ENCODE measurements at regions of chr9 and their contacts with region 1.

Region 1: GRCh38 chr9:37485389-37486219 is at the start of gene POLR1E:
- DNase-seq: peak; percentile 97
- H3K4me3 Mint-ChIP-seq: peak within 1 kb of the TSS; percentile 90
- H3K27ac Mint-ChIP-seq: peak within 1 kb of the TSS; percentile 94
- H3K4me1 Mint-ChIP-seq: peaks cover 27% of the 10 kb centered on the region
- H3K27me3 Mint-ChIP-seq: no peaks in the 10 kb centered on the region
- CTCF ChIP-seq: no peak
- total RNA-seq, gene POLR1E: 29.7 and 50.3 TPM in 2 replicates

Region 2: GRCh38 chr9:37174247-37174646 is 311.4 kb before region 1 on chr9:
- CTCF ChIA-PET with region 1: no interaction called
- POLR2A ChIA-PET with region 1: no interaction called
- intact Hi-C with region 1: no loop called
- DNase-seq: no peak
- H3K4me3 Mint-ChIP-seq: no peak overlapping the region
- H3K27ac Mint-ChIP-seq: no peak overlapping the region
- H3K4me1 Mint-ChIP-seq: no peaks in the 10 kb centered on the region
- H3K27me3 Mint-ChIP-seq: no peaks in the 10 kb centered on the region
- CTCF ChIP-seq: no peak

Region 3: DNA sequence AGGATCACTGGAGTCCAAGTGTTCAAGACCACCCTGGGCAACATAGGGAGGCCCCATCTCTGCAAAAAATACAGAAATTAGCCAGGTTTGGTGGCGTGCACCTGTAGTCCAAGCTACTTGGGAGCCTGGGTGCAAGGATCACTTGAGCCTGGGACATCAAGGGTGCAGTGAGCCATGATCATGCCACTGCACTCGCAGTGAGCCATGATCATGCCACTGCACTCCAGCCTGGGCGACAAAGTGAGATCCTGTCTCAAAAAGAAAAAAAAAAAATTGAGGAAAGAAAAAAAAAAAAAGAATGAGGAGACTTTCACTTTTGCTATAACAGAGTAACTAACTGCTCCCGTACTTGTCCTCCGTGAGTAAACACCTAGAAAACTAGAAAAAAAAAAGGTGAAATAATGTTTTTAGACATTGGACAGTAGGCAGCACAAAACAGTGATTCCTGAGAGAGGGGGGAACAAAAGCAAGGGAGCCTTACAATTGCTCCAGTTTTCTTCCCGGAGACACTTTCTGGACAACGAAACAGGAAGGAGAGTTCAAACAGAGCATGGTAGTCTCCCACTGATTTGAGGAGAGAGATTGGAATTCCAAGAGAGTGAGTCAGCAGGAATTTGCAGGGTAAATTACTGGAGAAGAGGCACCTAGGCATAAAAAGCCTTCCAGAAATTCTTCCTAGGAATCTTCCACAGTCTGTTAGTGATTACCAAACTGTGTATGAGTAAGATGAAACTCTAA is 13.5 kb before region 1 on chr9:
- CTCF ChIA-PET with region 1: no interaction called
- POLR2A ChIA-PET with region 1: interaction called, 75 read pairs
- intact Hi-C with region 1: no loop called
- DNase-seq: peak; percentile 95
- H3K4me3 Mint-ChIP-seq: peak overlapping the region; percentile 74
- H3K27ac Mint-ChIP-seq: peak overlapping the region; percentile 85
- H3K4me1 Mint-ChIP-seq: peaks cover 13% of the 10 kb centered on the region
- H3K27me3 Mint-ChIP-seq: no peaks in the 10 kb centered on the region
- CTCF ChIP-seq: no peak

Region 4: GRCh38 chr9:37592108-37592951 is 106.7 kb after region 1 on chr9 and contains the start of gene TOMM5:
- CTCF ChIA-PET with region 1: interaction called, 3 read pairs
- POLR2A ChIA-PET with region 1: interaction called, 16 read pairs
- intact Hi-C with region 1: loop called (anchors 5 kb)
- DNase-seq: peak; percentile 93
- H3K4me3 Mint-ChIP-seq: peak within 1 kb of the TSS; percentile 96
- H3K27ac Mint-ChIP-seq: peak within 1 kb of the TSS; percentile 98
- H3K4me1 Mint-ChIP-seq: peaks cover 16% of the 10 kb centered on the region
- H3K27me3 Mint-ChIP-seq: no peaks in the 10 kb centered on the region
- CTCF ChIP-seq: no peak
- total RNA-seq, gene TOMM5: 151 and 164 TPM in 2 replicates

Region 5: DNA sequence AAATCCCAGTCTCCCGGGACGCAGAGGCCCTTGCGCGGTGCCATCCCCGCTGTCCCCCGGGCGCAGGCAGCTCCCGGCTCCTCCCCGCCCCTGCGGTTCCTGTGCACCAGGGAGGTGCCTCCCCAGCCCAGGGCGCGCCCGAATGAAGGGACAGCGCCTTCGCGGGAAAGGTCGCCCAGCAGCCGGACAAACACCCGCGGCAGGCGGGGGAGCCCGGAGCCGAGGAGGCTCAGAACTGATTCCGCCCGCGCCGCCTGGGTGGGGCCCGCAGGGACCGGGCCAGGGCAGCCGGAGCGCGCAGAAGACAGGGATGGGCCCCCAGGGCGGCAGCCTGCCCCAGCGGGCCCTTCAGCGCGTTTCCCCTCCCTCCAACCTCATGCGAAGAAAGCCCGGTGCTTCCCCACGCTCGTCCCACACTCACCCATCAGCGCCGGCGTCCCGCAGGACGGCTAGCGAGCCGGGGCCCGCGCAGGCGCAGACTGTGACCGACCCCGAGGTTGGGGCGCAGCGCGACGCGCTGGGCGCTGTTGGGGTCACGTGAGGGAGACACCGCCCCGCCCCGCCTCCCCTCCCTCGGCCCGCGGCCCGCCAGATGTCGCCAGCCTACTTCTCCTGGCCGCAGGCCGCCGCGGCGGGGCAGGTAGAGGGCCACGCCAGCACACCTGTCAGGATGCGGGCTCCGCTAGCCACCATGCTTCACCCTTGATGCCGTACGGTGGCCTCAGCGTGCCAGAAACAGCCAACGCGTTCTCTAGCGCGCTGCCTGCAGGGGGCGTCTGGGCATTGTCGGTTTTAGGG is 418.2 kb after region 1 on chr9 and contains the start of gene SLC25A51:
- CTCF ChIA-PET with region 1: interaction called, 4 read pairs
- POLR2A ChIA-PET with region 1: interaction called, 11 read pairs
- intact Hi-C with region 1: loop called (anchors 10 kb)
- DNase-seq: peak; percentile 93
- H3K4me3 Mint-ChIP-seq: peak within 1 kb of the TSS; percentile 80
- H3K27ac Mint-ChIP-seq: peak within 1 kb of the TSS; percentile 95
- H3K4me1 Mint-ChIP-seq: peaks cover 30% of the 10 kb centered on the region
- H3K27me3 Mint-ChIP-seq: no peaks in the 10 kb centered on the region
- CTCF ChIP-seq: peak; percentile 93
- total RNA-seq, gene SLC25A51: 29.6 and 30.3 TPM in 2 replicates

Region 6: GRCh38 chr9:38362852-38363593 is 877.4 kb after region 1 on chr9:
- CTCF ChIA-PET with region 1: no interaction called
- POLR2A ChIA-PET with region 1: no interaction called
- intact Hi-C with region 1: loop called (anchors 10 kb)
- DNase-seq: peak; percentile 74
- H3K4me3 Mint-ChIP-seq: no peak overlapping the region
- H3K27ac Mint-ChIP-seq: no peak overlapping the region
- H3K4me1 Mint-ChIP-seq: peaks cover 8% of the 10 kb centered on the region
- H3K27me3 Mint-ChIP-seq: no peaks in the 10 kb centered on the region
- CTCF ChIP-seq: peak; percentile 66

Measured in MCF 10A (cell line).